Naive thymus-derived CD8-positive, alpha-beta T cell (primary cell): ENCODE measurements at regions of chr12 and their contacts with region 1.

Region 1: DNA sequence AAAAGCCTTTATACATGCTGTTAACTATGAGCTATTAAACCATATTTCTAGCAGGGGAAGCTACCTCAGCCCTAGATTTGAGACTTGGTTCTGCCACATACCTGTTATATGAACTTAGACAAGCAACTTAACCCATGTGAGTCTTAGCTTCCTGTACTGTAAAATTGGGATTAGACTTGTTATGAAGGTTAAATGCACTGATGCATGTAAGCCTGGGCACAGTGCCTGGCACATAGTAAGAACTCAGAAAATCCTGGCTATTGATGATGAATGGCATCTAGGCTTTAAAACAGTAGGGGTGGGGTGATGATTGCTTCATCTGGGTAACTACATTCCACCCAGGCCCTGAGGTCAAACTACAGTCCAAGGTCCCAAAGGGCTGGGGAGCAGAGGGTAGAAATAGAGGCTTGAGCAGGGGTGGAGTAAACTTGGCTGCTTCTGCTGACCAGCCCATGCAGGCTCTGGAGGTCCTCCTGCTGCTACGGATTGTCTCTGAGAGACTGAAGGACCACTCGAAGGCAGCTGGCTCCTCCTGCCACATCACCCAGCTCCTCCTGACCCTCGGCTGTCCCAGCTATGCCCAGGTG is 11.3 kb downstream of the ESPL1 start:
- DNase-seq: no peak
- ATAC-seq: no peak
- H3K4me3 Mint-ChIP-seq: no peak overlapping the region
- H3K27ac Mint-ChIP-seq: no peak overlapping the region
- H3K4me1 Mint-ChIP-seq: no peaks in the 10 kb centered on the region
- H3K27me3 Mint-ChIP-seq: no peaks in the 10 kb centered on the region

Region 2: DNA sequence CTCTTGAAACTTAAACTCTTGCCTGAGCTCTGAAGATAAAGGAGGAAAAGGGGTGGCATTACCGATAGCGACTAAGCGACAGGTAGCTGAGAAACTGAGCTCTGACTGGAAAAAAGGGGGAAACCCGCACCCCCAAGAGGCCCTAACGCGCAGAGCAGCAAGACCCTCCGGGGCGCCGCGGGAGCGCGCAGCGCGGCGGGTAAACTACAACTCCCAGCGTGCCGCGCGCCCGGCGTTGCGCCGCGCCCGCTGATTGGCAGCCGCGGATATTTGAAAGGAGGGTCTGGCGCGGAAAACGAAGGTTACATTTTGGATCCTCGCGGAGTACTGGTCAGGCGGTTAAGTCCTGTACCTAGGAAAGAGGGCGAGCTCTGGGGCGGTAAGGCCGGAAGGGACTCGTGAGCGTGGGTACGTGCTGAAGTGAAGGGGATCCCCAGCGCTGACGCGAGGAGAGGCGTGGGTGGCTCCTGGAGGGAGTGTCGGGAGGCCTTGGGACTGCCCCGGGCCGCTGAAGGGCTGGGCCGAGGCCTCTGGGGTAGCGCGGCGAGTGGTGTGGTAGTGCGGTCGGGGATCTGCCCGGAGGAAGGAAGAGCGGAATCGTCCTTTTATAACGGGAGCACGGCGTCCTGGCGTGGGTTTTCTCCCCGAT is 11.3 kb before region 1 on chr12 and contains the start of gene ESPL1:
- POLR2A ChIA-PET with region 1: interaction called, 14 read pairs
- DNase-seq: peak; percentile 77 to 91 (median 85)
- ATAC-seq: peak; percentile 90 to 95
- H3K4me3 Mint-ChIP-seq: peak within 1 kb of the TSS; percentile 92 to 100 (median 96)
- H3K27ac Mint-ChIP-seq: peak within 1 kb of the TSS; percentile 88 to 96 (median 94)
- H3K4me1 Mint-ChIP-seq: peaks cover 12 to 22% (median 20%) of the 10 kb centered on the region in 4 donors
- H3K27me3 Mint-ChIP-seq: peaks cover 0 to 4% (median 0%) of the 10 kb centered on the region in 5 donors
- polyA plus RNA-seq, gene ESPL1: not detected